ENCODE measurements at regions of chr11 and their contacts with region 1.

Region 1: DNA sequence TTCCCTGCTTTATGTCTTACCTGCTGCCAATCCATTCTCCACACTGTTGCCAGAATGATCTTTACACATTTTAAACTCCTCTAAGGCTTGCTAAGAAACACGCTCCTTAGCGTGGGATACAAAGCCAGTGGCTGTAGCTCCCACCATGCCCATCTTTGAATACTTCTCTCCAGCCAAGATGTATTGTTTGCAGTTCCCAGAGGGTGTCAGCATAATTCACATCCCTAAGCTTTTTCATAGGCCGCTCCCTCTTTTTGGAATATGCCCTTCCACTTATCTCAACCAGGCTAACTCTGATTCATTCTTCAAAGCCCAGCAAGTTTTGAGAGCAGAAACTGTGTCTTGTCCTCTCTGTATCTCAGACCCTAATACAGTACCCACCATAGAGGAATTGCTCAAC is 8.1 kb upstream of the UPK2 start:
- DNase-seq: no peak
- H3K4me3 Mint-ChIP-seq: no peak overlapping the region
- H3K27ac Mint-ChIP-seq: no peak overlapping the region
- H3K4me1 Mint-ChIP-seq: peaks cover 10% of the 10 kb centered on the region
- H3K27me3 Mint-ChIP-seq: peaks cover 23% of the 10 kb centered on the region

Region 2: DNA sequence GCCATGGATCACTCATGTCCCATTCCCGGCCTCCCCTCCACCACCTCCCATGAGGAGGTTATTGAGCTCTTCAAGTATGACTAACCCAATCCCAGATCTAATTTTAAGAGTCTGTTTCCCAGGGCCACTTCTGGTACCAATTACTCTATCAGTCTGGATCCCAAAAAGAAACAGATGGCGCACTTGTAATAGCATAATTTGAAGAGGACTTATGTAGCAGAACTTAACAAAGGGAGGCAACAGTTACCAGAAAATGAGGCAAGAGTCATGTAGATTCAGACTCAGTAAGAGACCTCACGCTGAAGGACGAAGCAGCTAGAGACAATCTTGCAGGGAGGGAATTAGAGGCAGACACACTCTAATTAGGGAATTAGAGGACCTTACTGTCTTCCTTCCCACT is 204.0 kb before region 1 on chr11:
- CTCF ChIA-PET with region 1: no interaction called
- POLR2A ChIA-PET with region 1: interaction called, 10 read pairs
- DNase-seq: no peak
- H3K4me3 Mint-ChIP-seq: no peak overlapping the region
- H3K27ac Mint-ChIP-seq: no peak overlapping the region
- H3K4me1 Mint-ChIP-seq: no peaks in the 10 kb centered on the region
- H3K27me3 Mint-ChIP-seq: peaks cover 3% of the 10 kb centered on the region

Region 3: GRCh38 chr11:119258180-119258579 is 310.2 kb after region 1 on chr11:
- CTCF ChIA-PET with region 1: no interaction called
- POLR2A ChIA-PET with region 1: no interaction called
- DNase-seq: peak; percentile 46
- H3K4me3 Mint-ChIP-seq: peak overlapping the region; percentile 3
- H3K27ac Mint-ChIP-seq: peak overlapping the region; percentile 55
- H3K4me1 Mint-ChIP-seq: peaks cover 46% of the 10 kb centered on the region
- H3K27me3 Mint-ChIP-seq: no peaks in the 10 kb centered on the region